Esophagus squamous epithelium (tissue), 5 donors: ENCODE measurements at regions of chr7 and their contacts with region 1.

Region 1: GRCh38 chr7:128425850-128426249 is 16.1 kb upstream of the IMPDH1 start:
- DNase-seq: no peak
- H3K4me3 ChIP-seq: no peak overlapping the region
- H3K27ac ChIP-seq: no peak overlapping the region
- H3K4me1 ChIP-seq: peaks cover 0 to 34% (median 2%) of the 10 kb centered on the region in 3 donors
- H3K27me3 ChIP-seq: no peaks in the 10 kb centered on the region
- CTCF ChIP-seq: peak; percentile 77 to 95 (median 93)
- POLR2A ChIP-seq: no peak

Region 2: DNA sequence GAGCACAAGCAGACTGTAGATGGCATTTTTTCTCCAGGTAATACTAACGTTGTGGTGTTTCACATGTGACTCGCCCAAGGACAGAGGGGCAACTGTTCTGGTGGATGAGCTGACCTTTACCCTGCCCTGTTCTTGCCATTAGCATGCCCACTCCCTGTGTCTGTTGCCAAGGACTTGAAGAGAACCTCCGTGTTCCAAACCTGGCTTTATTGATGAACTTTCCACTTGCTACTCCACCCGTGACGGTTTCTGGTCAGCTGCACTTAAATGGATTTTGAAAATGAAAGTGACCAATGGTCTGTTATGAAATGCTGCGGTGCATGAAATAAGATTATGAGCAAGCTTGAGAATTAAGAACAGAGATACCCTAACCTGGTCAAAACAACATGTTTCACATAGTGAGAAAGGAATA is 425.0 kb before region 1 on chr7:
- intact Hi-C with region 1: no loop called
- DNase-seq: no peak
- H3K4me3 ChIP-seq: peak overlapping the region in 1 of 4 donors; percentile 22
- H3K27ac ChIP-seq: no peak overlapping the region
- H3K4me1 ChIP-seq: peaks cover 0 to 6% (median 4%) of the 10 kb centered on the region in 3 donors
- H3K27me3 ChIP-seq: no peaks in the 10 kb centered on the region
- CTCF ChIP-seq: no peak
- POLR2A ChIP-seq: no peak

Region 3: DNA sequence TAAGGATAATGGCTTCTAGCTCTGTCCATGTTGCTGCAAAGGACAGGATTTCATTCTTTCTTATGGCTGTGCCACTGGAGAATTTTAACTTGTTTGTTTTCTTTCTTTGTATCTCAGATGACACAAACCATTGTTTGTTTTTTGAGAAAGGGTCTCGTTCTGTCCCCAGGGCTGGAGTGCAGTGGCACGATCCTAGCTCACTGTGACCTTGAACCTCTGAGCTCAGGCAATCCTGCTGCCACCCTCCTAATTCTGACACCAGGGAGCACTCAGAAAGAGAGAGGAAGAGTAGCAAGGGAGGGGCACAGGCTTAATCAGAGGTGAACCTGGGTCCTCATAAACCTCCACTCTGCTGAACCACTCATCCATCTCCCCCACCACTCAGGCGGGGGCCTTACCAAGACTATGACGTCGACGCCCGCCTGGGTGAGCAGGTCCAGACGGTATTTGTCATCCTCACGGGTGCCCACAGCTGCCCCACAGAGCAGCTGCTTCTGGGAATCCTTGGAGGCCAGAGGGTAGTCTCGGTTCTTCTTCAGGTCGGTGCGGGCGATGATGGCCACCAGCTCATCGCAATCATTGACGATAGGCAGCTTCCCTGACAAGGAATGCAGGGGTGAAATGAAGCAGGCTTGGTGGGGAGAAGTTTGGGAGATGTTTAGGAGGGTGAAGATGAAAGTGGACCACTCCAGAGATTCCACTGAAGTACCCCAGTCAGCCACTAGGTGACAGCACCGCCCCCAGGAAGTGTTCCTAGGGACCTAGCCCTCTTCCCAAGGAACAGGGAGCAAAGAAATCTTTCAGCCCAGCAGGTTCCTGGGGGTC is 27.6 kb before region 1 on chr7:
- intact Hi-C with region 1: loop called (anchors 2 kb)
- DNase-seq: no peak
- H3K4me3 ChIP-seq: no peak overlapping the region
- H3K27ac ChIP-seq: no peak overlapping the region
- H3K4me1 ChIP-seq: no peaks in the 10 kb centered on the region
- H3K27me3 ChIP-seq: no peaks in the 10 kb centered on the region
- CTCF ChIP-seq: peak; percentile 86 to 94 (median 90)
- POLR2A ChIP-seq: no peak

Region 4: DNA sequence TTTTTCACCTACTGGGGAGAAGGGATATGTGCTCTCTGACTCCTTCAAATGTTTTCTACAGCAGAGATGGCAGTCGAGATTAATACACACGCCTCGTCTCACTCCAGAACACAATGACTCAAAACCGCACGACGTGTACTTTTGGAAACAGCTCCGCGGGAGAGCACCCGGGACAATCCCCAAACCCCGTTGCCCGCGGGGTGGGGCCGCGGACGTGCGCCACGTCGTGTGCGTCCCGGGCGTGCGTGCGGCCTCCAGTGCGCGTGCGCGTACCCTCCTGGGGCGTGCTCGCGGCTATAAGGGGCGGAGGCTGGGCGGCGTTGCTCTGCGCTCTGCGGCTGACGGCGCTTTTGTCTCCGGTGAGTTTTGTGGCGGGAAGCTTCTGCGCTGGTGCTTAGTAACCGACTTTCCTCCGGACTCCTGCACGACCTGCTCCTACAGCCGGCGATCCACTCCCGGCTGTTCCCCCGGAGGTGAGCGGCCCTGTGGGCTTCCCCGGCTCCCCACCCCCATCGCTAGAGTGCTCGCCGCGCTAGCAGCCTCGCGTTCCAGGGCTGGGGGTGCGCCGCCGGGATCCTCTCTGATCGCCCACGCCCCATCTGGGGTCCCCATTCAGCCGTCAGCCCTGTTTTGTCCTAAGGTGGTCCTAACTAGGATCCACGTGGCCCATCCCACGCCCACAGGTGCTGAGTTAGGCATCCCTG is 29.9 kb after region 1 on chr7 and contains the start of gene HILPDA:
- intact Hi-C with region 1: loop called (anchors 2 kb)
- DNase-seq: peak; percentile 59
- H3K4me3 ChIP-seq: peak within 1 kb of the TSS; percentile 61 to 93 (median 80)
- H3K27ac ChIP-seq: peak within 1 kb of the TSS; percentile 82 to 95 (median 93)
- H3K4me1 ChIP-seq: peaks cover 31 to 67% (median 38%) of the 10 kb centered on the region in 3 donors
- H3K27me3 ChIP-seq: no peaks in the 10 kb centered on the region
- CTCF ChIP-seq: peak in 3 of 6 experiments; percentile 5 to 29 (median 16)
- POLR2A ChIP-seq: peak in 2 of 4 donors; percentile 78 to 85
- total RNA-seq, gene HILPDA: 17.6 to 53.0 (median 21.9) TPM